Heart right ventricle (tissue), 16 donors: ENCODE measurements at regions of chr12 and their contacts with region 1.

Region 1: DNA sequence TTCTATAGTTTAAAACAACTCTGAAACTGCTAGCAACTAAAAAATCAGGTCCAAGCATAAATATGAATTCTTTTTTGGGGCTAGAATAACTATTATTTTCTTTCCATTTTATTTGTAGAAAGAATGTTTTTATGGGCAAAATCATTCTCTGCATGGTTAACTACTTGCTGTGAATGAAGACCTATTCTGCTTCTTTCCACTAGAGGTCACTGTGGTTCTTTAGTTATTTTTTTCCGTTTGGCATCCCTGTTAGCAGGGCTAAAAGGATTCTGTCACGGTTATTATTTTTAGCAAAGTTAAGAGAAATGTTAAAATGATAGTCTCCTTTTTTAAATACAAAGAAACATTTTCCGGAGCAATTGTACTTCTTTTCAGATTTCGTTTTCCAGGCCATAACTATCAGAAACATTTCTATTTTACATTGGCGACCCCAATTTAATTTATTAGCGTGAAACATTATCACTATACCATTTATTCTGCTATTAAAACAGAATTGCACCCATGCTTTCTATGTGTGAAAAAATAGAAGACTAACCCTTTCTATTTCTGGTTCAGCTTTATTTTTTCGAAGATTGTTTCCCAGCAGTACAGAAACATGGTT is 404.8 kb downstream of the ATP23 start:
- DNase-seq: no peak
- ATAC-seq: peak in 1 of 8 donors; percentile 58
- H3K4me3 ChIP-seq: no peak overlapping the region
- H3K27ac ChIP-seq: no peak overlapping the region
- H3K4me1 ChIP-seq: peaks cover 0 to 14% (median 0%) of the 10 kb centered on the region in 9 donors
- H3K27me3 ChIP-seq: peaks cover 0 to 3% (median 0%) of the 10 kb centered on the region in 7 donors
- CTCF ChIP-seq: peak; percentile 73 to 91 (median 89)

Region 2: GRCh38 chr12:58443273-58443980 is 97.3 kb after region 1 on chr12:
- intact Hi-C with region 1: loop called in 6 of 10 experiments (anchors 2 to 10 kb)
- DNase-seq: peak in 1 of 2 donors; percentile 6
- ATAC-seq: peak in 3 of 8 donors; percentile 44 to 49 (median 47)
- H3K4me3 ChIP-seq: no peak overlapping the region
- H3K27ac ChIP-seq: no peak overlapping the region
- H3K4me1 ChIP-seq: peaks cover 0 to 9% (median 0%) of the 10 kb centered on the region in 9 donors
- H3K27me3 ChIP-seq: no peaks in the 10 kb centered on the region
- CTCF ChIP-seq: peak in 7 of 9 donors; percentile 39 to 59 (median 47)

Region 3: DNA sequence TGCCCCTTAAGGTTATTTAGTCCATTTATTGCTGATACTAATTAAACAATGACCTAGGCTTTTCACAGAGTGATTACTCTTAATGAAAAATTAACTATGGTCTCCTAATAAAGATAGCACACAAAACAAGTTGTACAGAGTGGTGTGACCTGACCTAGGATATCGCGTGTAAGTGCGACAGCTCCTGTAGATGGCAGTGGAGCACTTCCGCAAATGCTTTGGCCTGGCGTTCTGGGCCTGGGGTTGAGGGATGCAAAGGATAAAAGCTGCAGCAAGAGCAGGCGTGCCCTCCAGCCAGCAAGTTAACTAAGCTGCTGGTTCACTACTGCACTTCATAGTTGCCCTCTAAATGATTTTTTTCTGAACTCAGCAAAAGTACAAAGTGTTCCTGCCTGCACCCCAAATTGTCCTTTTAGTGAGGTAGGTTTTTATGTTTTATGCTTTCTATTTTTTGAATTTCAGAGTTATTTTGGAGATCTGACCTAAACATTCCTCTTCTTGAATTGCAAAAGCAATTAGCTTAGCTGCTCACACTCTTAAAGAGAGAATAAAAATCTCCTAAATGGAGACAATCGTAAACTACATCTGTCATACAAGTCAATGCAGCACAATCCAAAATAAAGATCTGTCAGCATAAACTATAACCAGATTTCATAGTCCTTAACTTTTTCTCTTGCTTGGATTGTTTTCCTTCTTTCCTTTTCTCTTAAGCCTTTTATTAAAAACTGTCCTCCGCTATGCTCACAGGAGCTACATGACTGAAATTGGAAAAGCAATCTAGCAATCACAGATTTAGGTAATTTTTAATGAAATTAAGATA is 194.6 kb after region 1 on chr12:
- intact Hi-C with region 1: loop called in 3 of 10 experiments (anchors 5 to 10 kb)
- DNase-seq: peak; percentile 40 to 54
- ATAC-seq: peak; percentile 62 to 94 (median 84)
- H3K4me3 ChIP-seq: no peak overlapping the region
- H3K27ac ChIP-seq: no peak overlapping the region
- H3K4me1 ChIP-seq: no peaks in the 10 kb centered on the region
- H3K27me3 ChIP-seq: no peaks in the 10 kb centered on the region
- CTCF ChIP-seq: peak; percentile 42 to 81 (median 72)

Region 4: DNA sequence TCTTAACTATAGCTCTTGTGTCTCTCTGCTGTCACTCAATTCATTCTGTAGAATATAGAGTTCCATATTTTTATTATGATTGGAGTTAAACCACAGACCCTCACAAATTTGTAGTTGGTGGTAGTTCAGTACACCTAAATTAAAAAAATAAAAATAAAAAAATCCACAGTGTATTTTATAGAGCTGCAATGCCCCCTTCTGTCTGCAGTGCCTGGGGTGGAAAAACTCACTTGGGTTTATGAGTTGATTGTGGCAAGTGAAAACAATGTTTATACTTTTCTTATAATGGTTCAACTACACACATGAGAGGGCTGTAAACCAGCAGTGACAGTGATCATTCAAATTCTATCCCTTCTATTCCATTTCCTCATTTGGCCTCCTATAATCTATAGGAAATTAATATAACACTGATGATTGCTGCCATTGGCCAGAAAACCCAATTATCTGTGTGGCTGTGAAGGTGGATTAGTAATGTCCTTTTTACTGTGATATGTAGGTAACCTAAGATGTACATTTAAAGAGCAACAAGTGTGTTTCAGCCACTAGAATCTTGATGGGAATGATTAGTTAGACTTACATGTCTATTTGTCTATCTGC is 741.0 kb after region 1 on chr12:
- intact Hi-C with region 1: loop called in 1 of 10 experiments (anchors 5 kb)
- DNase-seq: no peak
- ATAC-seq: no peak
- H3K4me3 ChIP-seq: no peak overlapping the region
- H3K27ac ChIP-seq: no peak overlapping the region
- H3K4me1 ChIP-seq: no peaks in the 10 kb centered on the region
- H3K27me3 ChIP-seq: no peaks in the 10 kb centered on the region
- CTCF ChIP-seq: peak in 8 of 9 donors; percentile 16 to 61 (median 46)

Region 5: DNA sequence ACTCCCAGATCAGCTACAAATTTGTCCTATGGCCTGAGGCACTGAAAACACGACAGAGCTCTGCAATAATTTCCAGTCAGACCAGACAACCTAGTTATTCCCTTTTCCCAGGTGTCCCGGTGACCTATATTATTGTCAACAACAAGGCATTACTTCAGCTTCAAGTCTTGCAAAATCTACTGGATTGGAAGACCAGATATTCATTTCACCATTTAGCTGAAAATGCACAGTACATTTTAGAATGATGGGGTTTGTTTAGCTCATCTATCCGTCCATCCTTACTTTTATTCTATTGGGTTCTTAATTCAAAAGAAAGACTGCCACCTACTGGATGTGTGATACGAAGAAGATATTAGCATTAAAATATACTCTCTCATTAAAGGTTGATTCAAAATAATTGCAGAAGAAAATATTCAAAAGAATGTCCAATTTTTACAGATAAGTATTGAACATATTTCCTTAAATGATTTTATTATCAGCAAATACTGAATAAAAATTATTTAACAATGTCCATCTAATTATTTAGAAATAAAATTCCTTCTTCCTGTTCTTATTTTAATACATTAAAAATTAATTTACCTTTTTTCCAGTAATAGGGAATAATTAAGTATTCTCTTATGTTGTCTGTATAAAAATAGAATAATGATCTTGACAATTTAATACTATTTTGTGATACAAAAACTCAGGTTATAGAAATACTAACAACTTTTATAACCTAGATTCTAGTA is 819.0 kb after region 1 on chr12:
- intact Hi-C with region 1: loop called in 1 of 10 experiments (anchors 5 kb)
- DNase-seq: no peak
- ATAC-seq: no peak
- H3K4me3 ChIP-seq: no peak overlapping the region
- H3K27ac ChIP-seq: no peak overlapping the region
- H3K4me1 ChIP-seq: no peaks in the 10 kb centered on the region
- H3K27me3 ChIP-seq: peaks cover 0 to 3% (median 0%) of the 10 kb centered on the region in 7 donors
- CTCF ChIP-seq: peak in 8 of 9 donors; percentile 25 to 67 (median 58)